ENCODE measurements at regions of chr14 and their contacts with region 1.

Region 1: GRCh38 chr14:32076278-32077080 is 625 bp upstream of the ARHGAP5 start:
- DNase-seq: peak; percentile 94
- H3K4me3 ChIP-seq: peak overlapping the region; percentile 56 to 77 (median 72)
- H3K27ac ChIP-seq: peak overlapping the region; percentile 53
- H3K4me1 ChIP-seq: peaks cover 17% of the 10 kb centered on the region
- H3K27me3 ChIP-seq: peaks cover 2 to 4% of the 10 kb centered on the region in 2 experiments
- CTCF ChIP-seq: no peak
- POLR2A ChIP-seq: peak; percentile 28

Region 2: DNA sequence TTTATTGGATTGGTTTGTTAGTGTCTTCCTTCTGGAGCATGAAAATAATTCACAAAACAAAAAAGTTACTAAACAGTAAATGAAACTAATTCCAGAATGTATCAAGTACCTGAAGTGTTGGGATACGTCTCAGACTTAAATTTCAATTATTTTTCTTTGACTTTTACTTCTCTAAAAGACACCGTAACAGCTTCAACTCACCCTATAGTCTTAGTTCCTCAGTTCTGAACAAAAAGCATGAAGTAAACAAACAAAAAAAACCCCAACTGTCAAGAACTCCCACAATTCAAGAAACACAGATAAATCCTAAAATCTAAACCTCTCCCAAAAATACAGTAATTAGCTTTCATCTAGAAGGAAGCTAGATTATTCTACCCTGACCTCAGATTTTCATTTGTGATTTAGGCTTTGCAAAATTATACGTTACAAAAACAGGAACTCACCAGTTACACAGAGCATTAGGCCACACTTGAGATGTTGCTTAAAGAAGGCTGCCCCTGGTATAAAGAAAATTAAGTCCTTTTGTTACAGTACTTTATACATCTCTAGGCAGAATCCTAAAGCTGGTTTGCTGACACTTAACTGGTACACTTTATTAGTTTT is 666.3 kb before region 1 on chr14:
- CTCF ChIA-PET with region 1: no interaction called
- POLR2A ChIA-PET with region 1: no interaction called
- dilution Hi-C with region 1: no loop called
- intact Hi-C with region 1: no loop called
- DNase-seq: no peak
- H3K4me3 ChIP-seq: no peak overlapping the region
- H3K27ac ChIP-seq: no peak overlapping the region
- H3K4me1 ChIP-seq: peaks cover 11% of the 10 kb centered on the region
- H3K27me3 ChIP-seq: no peaks in the 10 kb centered on the region
- CTCF ChIP-seq: no peak
- POLR2A ChIP-seq: no peak

Region 3: DNA sequence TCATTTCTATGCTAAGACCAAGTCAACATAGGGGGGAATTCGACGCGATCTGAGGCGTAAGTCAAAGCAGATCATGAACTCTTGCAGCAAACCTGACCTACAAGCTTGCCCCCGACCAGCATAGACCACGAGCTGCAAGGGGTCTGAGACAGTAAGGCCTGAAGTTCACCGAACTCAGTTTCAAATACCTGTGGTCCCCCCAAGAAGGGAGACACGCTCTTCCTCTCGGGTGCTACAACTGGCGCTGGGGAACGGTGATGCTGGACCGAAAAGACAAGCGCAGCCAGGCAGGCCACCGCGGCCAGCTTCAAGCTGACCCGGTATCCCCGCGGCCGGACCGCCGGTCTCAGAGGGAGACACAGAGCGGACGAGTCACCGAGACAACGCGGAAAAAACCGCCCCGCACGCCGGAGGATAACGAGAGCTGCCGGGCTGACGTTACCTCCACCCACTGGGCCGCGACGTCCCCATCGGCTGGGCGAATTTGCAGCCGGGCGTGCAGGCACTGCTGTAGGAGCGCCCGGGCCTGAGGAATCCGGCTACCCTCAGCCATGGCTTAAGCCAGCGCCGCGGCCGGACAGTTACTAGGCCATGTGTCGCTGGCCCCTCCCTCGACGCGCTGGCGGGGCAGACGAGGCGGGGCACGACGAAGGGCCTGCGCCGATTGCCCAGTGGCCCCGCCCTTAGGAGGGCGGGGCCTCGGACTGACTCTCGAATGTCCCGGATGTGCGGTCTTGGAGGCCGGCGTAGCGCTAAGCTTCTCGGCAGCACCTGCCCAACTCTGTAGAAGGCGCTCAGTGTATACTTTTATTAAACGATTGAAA is 619.4 kb before region 1 on chr14 and contains the start of gene DTD2:
- CTCF ChIA-PET with region 1: interaction called, 4 read pairs
- POLR2A ChIA-PET with region 1: no interaction called
- dilution Hi-C with region 1: no loop called
- intact Hi-C with region 1: loop called (anchors 1 kb)
- DNase-seq: peak; percentile 95
- H3K4me3 ChIP-seq: peak within 1 kb of the TSS; percentile 34 to 64 (median 63)
- H3K27ac ChIP-seq: peak within 1 kb of the TSS; percentile 70
- H3K4me1 ChIP-seq: peaks cover 2% of the 10 kb centered on the region
- H3K27me3 ChIP-seq: no peaks in the 10 kb centered on the region
- CTCF ChIP-seq: no peak
- POLR2A ChIP-seq: peak; percentile 88
- total RNA-seq, gene DTD2: 10.8 and 14.4 TPM in 2 replicates

Region 4: GRCh38 chr14:31561155-31561846 is 515.2 kb before region 1 on chr14 and contains the start of gene NUBPL:
- CTCF ChIA-PET with region 1: no interaction called
- POLR2A ChIA-PET with region 1: no interaction called
- dilution Hi-C with region 1: no loop called
- intact Hi-C with region 1: loop called (anchors 2 kb)
- DNase-seq: peak; percentile 95
- H3K4me3 ChIP-seq: peak within 1 kb of the TSS; percentile 32 to 80 (median 73)
- H3K27ac ChIP-seq: peak within 1 kb of the TSS; percentile 51
- H3K4me1 ChIP-seq: peaks cover 4% of the 10 kb centered on the region
- H3K27me3 ChIP-seq: peaks cover 0 to 4% of the 10 kb centered on the region in 2 experiments
- CTCF ChIP-seq: no peak
- POLR2A ChIP-seq: peak; percentile 78
- total RNA-seq, gene NUBPL: 8.2 and 12.3 TPM in 2 replicates

Region 5: GRCh38 chr14:32202998-32203882 is 126.8 kb after region 1 on chr14 and contains the start of gene RNU6-8:
- CTCF ChIA-PET with region 1: interaction called, 5 read pairs
- POLR2A ChIA-PET with region 1: no interaction called
- dilution Hi-C with region 1: no loop called
- intact Hi-C with region 1: loop called (anchors 1 kb)
- DNase-seq: peak; percentile 88
- H3K4me3 ChIP-seq: peak within 1 kb of the TSS; percentile 55 to 92 (median 78)
- H3K27ac ChIP-seq: peak within 1 kb of the TSS; percentile 88
- H3K4me1 ChIP-seq: peaks cover 16% of the 10 kb centered on the region
- H3K27me3 ChIP-seq: peaks cover 6 to 17% of the 10 kb centered on the region in 2 experiments
- CTCF ChIP-seq: no peak
- POLR2A ChIP-seq: peak; percentile 46
- total RNA-seq, gene RNU6-8: not detected in 2 replicates

Region 6: GRCh38 chr14:32417956-32418552 is 341.6 kb after region 1 on chr14:
- CTCF ChIA-PET with region 1: interaction called, 3 read pairs
- POLR2A ChIA-PET with region 1: no interaction called
- dilution Hi-C with region 1: no loop called
- intact Hi-C with region 1: loop called (anchors 2 kb)
- DNase-seq: peak; percentile 89
- H3K4me3 ChIP-seq: no peak overlapping the region
- H3K27ac ChIP-seq: peak overlapping the region; percentile 54
- H3K4me1 ChIP-seq: peaks cover 36% of the 10 kb centered on the region
- H3K27me3 ChIP-seq: no peaks in the 10 kb centered on the region
- CTCF ChIP-seq: no peak
- POLR2A ChIP-seq: no peak

Region 7: DNA sequence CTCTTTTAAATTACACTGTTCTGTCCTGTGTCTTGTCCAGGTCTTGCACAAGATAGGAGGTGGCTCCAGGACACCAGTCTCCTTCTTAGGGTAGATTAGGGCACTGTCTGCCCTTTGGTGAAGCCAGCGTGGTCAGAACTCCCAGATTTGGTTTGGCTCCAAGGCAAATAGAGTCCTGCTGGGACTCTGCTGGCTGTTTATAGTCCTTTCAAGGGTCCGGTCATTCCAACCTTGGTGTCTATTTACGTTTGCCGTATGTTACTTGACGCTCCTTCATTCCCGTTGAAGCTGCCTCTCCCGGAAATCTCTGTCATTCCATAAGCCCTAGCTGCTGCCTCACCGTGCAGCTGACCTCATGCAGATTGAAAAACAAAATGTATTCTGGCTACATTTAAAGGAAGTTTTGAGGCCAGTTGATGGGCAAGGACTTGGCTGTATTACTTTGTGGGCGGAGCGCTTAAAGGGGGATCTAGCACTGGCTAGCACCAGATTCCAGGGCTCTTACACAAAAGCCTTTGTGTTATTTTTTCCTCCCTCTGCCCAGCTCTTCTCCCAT is 433.2 kb after region 1 on chr14:
- CTCF ChIA-PET with region 1: interaction called, 4 read pairs
- POLR2A ChIA-PET with region 1: no interaction called
- dilution Hi-C with region 1: no loop called
- intact Hi-C with region 1: loop called (anchors 5 kb)
- DNase-seq: peak; percentile 98
- H3K4me3 ChIP-seq: no peak overlapping the region
- H3K27ac ChIP-seq: peak overlapping the region; percentile 67
- H3K4me1 ChIP-seq: peaks cover 25% of the 10 kb centered on the region
- H3K27me3 ChIP-seq: no peaks in the 10 kb centered on the region
- CTCF ChIP-seq: no peak
- POLR2A ChIP-seq: peak; percentile 41